Heart left ventricle (tissue), 16 donors: ENCODE measurements at regions of chr6 and their contacts with region 1.

Region 1: DNA sequence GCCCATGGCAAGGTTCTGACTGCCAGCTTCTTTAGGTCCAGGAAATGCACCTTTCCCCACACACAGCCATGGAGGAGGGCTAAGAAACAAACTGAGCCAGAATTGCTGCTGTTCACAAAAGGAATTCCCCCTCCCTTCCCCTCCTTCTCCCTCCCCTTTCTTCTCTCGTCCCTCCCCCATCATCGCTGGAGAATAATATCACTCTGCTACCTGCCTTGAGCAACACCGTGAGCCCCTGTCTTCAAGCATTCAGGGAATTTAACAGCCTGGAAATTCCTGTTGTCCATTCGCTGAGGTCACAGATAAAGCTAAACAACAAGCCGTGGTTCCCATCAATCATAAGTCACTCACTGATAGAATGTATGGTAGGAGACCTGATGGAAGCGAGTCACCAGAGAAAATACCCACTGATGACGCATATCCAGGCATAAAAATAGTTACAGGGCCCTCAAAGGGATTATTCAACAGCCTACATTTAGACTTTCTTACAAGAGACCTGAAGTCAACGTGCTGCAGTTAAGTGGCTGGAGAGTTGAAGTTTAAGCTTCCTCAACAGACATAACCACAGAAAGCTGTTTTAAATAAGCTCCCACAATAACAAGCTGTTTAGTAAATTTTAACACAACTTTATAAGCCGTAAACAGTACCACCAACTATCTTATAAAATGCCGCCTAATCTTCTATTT is 59.7 kb downstream of the HIVEP2 start:
- DNase-seq: peak in 3 of 5 donors; percentile 38 to 67 (median 48)
- ATAC-seq: peak; percentile 89 to 97 (median 94)
- H3K4me3 ChIP-seq: peak overlapping the region in 10 of 12 donors; percentile 23 to 59 (median 50)
- H3K27ac ChIP-seq: peak overlapping the region; percentile 7 to 79 (median 70)
- H3K4me1 ChIP-seq: peaks cover 7 to 66% (median 45%) of the 10 kb centered on the region in 12 donors
- H3K27me3 ChIP-seq: no peaks in the 10 kb centered on the region
- CTCF ChIP-seq: no peak
- POLR2A ChIP-seq: peak in 1 of 2 donors; percentile 5

Region 2: GRCh38 chr6:142635130-142635529 is 250.2 kb before region 1 on chr6:
- intact Hi-C with region 1: no loop called
- DNase-seq: no peak
- ATAC-seq: no peak
- H3K4me3 ChIP-seq: no peak overlapping the region
- H3K27ac ChIP-seq: no peak overlapping the region
- H3K4me1 ChIP-seq: no peaks in the 10 kb centered on the region
- H3K27me3 ChIP-seq: no peaks in the 10 kb centered on the region
- CTCF ChIP-seq: no peak
- POLR2A ChIP-seq: no peak

Region 3: GRCh38 chr6:142746524-142746923 is 138.8 kb before region 1 on chr6:
- intact Hi-C with region 1: loop called in 3 of 10 experiments (anchors 5 to 10 kb)
- DNase-seq: peak in 1 of 5 donors; percentile 25
- ATAC-seq: peak in 2 of 4 donors; percentile 53 to 56
- H3K4me3 ChIP-seq: no peak overlapping the region
- H3K27ac ChIP-seq: no peak overlapping the region
- H3K4me1 ChIP-seq: no peaks in the 10 kb centered on the region
- H3K27me3 ChIP-seq: no peaks in the 10 kb centered on the region
- CTCF ChIP-seq: peak; percentile 23 to 59 (median 45)
- POLR2A ChIP-seq: no peak

Region 4: GRCh38 chr6:142756215-142756634 is 129.1 kb before region 1 on chr6:
- intact Hi-C with region 1: loop called in 3 of 10 experiments (anchors 5 to 10 kb)
- DNase-seq: peak in 1 of 5 donors; percentile 41
- ATAC-seq: peak; percentile 57 to 72 (median 64)
- H3K4me3 ChIP-seq: no peak overlapping the region
- H3K27ac ChIP-seq: no peak overlapping the region
- H3K4me1 ChIP-seq: peaks cover 0 to 8% (median 0%) of the 10 kb centered on the region in 12 donors
- H3K27me3 ChIP-seq: no peaks in the 10 kb centered on the region
- CTCF ChIP-seq: no peak
- POLR2A ChIP-seq: no peak

Region 5: DNA sequence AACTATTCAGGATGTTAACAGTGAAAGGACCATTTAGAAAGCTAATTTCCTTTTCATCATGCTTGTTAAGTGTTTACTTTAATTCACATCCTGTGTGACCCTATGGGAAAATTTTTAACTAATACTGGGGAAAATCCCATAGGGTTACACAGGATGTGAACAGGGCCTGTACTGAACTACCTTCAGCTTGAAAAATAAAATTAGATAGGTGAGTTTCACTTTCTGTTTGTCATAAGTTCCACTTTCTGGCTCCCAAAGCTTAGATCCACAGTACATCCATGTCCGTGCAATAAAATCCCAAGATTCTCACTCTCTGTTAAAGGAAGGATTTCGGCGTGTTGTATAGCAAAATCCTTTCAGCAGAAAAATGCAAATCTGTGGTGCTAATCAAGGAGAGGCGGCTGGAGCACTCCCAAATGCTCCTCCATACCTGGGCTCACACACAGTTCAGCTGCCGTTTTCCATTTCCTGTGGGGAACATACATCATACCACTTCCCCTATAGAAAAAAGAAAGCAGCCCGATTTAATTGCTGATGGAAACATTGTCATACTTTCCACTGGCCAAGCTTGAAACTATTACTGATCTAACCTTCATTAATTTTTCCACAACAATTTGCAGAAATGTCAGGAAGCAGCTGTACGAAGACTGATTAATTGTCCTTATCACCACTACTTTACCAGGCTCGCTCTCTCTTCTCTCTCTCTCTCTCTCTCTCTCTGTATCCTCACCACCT is 65.6 kb before region 1 on chr6:
- intact Hi-C with region 1: loop called in 1 of 10 experiments (anchors 10 kb)
- DNase-seq: no peak
- ATAC-seq: peak; percentile 22 to 75 (median 38)
- H3K4me3 ChIP-seq: peak overlapping the region in 11 of 12 donors; percentile 6 to 56 (median 44)
- H3K27ac ChIP-seq: peak overlapping the region; percentile 38 to 86 (median 75)
- H3K4me1 ChIP-seq: peaks cover 4 to 73% (median 50%) of the 10 kb centered on the region in 12 donors
- H3K27me3 ChIP-seq: no peaks in the 10 kb centered on the region
- CTCF ChIP-seq: no peak
- POLR2A ChIP-seq: no peak

Region 6: GRCh38 chr6:142845624-142846458 is 39.5 kb before region 1 on chr6:
- intact Hi-C with region 1: loop called in 3 of 10 experiments (anchors 1 to 5 kb)
- DNase-seq: peak; percentile 91 to 96 (median 95)
- ATAC-seq: peak; percentile 95 to 97 (median 96)
- H3K4me3 ChIP-seq: peak overlapping the region in 10 of 12 donors; percentile 23 to 53 (median 42)
- H3K27ac ChIP-seq: peak overlapping the region; percentile 69 to 89 (median 86)
- H3K4me1 ChIP-seq: peaks cover 11 to 96% (median 78%) of the 10 kb centered on the region in 12 donors
- H3K27me3 ChIP-seq: no peaks in the 10 kb centered on the region
- CTCF ChIP-seq: peak in 4 of 12 donors; percentile 7 to 28 (median 26)
- POLR2A ChIP-seq: peak in 1 of 2 donors; percentile 63

Region 7: DNA sequence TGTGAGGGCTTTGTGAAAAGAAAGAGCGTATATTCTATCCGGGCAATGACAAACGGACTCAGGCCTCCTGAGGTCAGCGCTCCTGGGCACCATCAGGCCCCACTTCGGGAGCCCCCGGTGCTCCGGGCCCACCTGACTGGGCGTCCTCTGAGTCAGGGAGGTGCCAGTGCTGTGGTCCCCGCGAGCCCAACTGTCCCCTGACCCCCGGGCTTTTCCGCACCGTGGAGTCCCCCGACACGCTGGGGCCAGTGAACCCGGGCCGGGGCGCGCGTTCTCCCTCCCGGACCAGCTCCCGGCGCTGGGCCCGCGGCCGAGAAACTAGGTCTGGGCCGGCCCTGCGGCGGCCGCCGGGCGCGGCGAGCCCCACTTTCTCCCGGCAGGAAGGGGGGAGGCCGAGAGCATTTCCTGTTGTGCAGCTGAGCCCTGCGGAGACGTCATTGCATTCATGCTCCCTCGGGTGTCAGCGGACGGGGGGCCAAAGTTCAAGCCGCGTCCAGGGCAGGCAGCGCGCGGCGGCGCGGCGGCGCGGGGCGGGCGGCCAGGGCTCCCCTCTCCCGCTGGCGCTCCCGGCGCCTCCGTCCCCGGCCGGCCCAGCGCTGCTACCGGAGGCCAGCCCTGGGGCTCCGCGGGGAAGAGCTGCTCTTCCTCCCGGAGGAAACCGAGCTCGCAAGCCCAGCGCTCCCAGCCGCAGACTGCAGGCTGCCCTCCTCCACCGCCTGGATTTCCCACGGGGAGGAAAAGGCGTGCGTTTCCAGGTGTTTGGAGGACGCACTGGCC is 41.4 kb after region 1 on chr6:
- intact Hi-C with region 1: loop called in 5 of 10 experiments (anchors 5 kb)
- DNase-seq: peak; percentile 91 to 94 (median 93)
- ATAC-seq: peak; percentile 79 to 95 (median 93)
- H3K4me3 ChIP-seq: peak overlapping the region; percentile 49 to 87 (median 68)
- H3K27ac ChIP-seq: peak overlapping the region; percentile 92 to 98 (median 96)
- H3K4me1 ChIP-seq: peaks cover 7 to 47% (median 32%) of the 10 kb centered on the region in 12 donors
- H3K27me3 ChIP-seq: no peaks in the 10 kb centered on the region
- CTCF ChIP-seq: no peak
- POLR2A ChIP-seq: peak in 1 of 2 donors; percentile 48

Region 8: DNA sequence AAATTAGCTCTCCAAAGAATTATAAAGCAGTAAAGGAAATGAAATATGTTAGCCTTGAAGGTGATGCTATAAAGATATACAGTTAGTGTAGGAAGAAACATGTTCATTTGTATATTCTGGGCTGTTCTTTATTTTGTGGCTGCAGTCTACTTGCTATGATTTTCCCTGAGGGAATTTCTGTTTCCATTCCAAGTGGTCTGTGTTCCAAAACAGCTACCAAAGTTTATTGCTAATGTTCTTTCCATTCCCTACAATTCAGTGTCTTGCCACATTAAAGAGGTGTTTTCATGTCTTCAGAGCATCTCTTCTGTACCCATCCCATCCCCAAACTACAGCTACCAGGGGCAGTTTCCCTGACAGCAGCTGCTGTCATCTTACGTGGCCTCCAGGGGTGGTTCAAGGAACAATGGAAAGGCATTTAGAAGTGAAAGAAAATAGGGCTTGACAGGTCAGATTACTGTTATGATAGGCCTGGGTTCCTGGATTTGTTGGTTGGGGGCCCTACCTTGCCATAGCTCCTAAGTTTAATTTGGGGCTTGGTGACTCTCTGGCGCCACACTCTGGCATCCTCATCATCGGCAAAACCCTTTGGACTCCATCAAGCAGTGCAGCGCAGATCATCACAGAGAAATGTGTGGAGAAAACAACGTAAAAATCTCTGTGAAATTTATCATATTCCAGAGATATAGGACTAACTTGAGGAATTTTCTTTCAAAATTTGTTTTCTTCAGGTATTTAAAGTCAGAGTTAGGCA is 141.5 kb after region 1 on chr6:
- intact Hi-C with region 1: loop called in 2 of 10 experiments (anchors 5 to 10 kb)
- DNase-seq: peak in 4 of 5 donors; percentile 23 to 38 (median 36)
- ATAC-seq: peak in 3 of 4 donors; percentile 65 to 78 (median 68)
- H3K4me3 ChIP-seq: no peak overlapping the region
- H3K27ac ChIP-seq: no peak overlapping the region
- H3K4me1 ChIP-seq: no peaks in the 10 kb centered on the region
- H3K27me3 ChIP-seq: no peaks in the 10 kb centered on the region
- CTCF ChIP-seq: peak; percentile 55 to 76 (median 66)
- POLR2A ChIP-seq: no peak